G401 (cell line): ENCODE measurements at regions of chr17 and their contacts with region 1.

Region 1: GRCh38 chr17:75904749-75905521 is at the start of gene MRPL38:
- DNase-seq: peak; percentile 94
- total RNA-seq, gene MRPL38: 102 and 134 TPM in 2 replicates

Region 2: DNA sequence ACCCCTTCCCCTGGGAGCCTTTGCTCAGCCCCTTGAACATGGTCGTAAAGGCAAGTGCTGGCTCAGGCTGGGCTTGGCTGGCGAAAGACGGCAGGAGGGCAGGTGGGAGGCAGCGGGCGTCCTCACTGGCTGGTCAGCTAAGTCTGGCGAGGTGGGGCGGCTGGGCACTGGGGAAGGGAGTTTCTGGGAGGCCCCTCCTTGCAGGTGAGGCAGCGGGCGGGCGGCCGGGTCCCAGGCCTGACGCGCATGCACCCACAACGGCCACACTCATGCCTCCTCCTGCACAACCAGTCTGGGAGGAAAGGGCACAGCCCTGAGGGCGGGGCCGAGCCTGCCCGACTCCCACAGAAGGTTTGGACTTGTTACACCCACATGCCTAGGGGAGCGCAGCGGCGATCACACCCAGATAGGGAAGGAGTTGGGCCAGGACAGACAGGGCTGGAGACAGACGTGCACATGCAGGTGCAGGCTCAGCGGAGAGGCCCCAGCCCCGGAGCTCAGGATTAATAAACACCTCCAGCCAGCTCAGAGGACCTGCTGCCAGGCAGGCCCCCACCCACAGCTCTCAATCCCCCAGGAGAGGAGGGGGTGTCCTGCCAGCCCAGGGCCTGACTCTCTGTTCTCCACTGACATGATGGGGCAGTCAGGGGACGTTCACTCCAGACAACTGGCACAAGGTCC is 122.4 kb after region 1 on chr17 and contains the start of gene EVPL:
- in situ Hi-C with region 1: loop called (anchors 25 kb)
- DNase-seq: no peak
- total RNA-seq, gene EVPL: 0.80 and 5.4 TPM in 2 replicates

Region 3: DNA sequence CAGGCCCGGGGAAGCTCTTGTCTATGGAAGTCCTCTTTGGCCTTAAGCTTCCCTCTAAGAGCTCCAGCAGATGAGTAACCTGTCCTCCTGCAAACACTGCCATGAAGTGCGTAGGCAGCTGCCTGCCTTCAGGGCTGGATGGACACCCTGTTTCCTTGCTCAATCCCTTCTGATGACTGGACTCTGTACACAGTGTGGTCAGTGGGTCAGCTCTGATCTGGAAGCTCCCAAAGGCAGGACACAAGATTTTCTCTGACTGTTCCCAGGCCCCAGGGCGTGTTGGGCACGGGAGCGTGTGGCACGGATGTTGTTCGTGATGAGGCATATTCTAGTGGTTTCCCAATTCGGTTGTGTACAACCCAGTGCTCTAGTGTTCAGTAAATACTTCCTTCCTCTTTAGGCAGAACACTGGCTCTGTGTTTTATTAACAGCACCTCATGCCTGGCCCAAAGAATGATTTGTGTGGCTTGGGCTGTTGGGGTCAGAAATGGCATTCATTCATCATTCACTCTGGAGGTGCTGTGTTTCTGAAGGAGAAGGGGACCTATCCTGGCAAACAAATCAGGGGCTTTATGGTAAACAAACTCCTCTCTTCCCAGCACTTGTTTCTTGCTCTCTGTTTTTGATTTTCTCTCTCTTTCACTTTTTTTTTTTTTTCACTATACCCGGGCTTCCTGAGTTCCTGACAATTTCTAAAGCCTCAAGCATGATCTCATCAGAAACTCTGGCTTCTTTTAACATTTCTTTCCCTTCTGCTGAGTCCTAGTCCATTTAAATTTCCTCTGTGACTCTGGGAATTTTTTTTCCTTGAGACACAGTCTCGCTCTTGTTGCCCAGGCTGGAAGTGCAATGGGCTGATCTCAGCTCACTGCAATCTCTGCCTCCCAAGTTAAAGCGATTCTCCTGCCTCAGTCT is 347.4 kb after region 1 on chr17:
- in situ Hi-C with region 1: loop called (anchors 10 kb)
- DNase-seq: no peak